Activated naive CD4-positive, alpha-beta T cell treated with anti-CD3 and anti-CD28 coated beads for 36 hours (primary cell): ENCODE measurements at regions of chr1 and their contacts with region 1.

Region 1: DNA sequence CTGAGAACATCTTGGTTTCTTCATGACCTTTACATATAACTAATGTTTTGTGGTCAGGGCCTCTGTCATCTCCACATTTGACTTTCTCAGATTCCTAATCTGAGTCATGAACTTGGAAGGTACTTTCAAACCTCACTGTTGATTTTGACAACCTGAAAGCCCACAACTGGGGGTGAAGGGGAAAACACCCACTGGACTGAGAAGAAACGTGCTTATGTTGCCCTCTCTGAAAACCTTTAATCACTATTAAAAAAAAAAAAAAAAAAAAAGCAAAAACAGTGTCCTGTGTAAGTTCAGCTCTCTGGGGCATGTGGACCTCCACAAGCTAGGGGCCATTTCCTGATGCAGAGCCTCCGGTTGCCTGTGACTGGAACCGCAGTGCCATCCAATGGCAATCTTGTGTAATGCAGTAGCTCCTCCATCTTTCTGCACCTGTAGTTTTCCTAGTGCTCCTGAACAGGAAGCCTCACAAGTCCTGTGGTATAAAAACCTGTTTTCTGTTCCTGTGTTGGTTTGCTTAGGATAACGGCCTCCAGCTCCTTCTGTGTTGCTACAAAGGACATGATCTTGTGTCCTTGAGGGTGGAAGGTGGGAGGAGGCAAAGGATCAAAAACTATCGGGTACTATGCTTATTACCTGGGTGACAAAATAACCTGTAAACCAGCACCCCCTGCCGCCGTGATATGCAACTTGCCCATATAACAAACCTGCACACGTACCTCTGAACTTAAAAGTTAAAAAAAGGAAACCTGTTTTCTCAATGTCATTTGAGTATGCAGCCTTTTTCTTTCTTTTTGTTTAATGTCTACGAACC is 124.5 kb downstream of the ZNF648 start:
- DNase-seq: peak; percentile 77
- H3K4me3 Mint-ChIP-seq: no peak overlapping the region
- H3K27ac Mint-ChIP-seq: no peak overlapping the region
- H3K4me1 Mint-ChIP-seq: peaks cover 4% of the 10 kb centered on the region
- H3K27me3 Mint-ChIP-seq: no peaks in the 10 kb centered on the region

Region 2: DNA sequence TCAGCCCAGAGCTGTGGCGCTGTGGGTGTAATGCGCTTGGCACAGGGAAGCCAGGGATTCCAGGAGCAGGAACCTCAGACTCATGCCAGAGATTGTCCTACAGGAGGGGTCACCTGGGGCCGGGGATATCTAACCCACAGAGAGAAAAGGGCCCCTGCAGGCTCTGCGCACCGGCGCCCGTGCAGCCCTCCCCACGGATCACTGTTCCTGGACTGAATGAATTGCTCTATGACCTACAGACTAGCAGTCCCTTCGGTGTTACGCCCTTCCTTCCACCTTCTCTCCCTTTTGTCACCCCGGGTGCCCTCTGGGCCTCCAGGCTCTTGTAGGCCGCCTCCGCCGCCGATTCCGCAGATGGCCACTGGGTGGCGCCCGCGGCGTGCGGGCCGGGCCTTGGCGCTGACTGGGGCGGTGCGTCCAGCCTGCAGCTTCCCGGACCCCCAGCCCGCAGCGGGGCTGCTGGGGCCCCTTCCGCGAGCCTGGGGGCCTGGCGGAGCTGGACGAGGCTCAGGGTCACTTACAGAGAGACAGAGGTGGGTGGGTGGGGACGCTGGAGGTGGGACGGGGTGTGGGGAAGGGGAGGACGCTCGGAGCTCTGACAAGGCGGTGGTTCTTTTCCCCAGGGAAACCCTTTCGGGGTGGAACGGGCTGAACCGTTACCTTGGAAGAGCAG is 747.1 kb before region 1 on chr1:
- CTCF ChIA-PET with region 1: no interaction called
- intact Hi-C with region 1: loop called (anchors 5 kb)
- DNase-seq: peak; percentile 78
- H3K4me3 Mint-ChIP-seq: no peak overlapping the region
- H3K27ac Mint-ChIP-seq: no peak overlapping the region
- H3K4me1 Mint-ChIP-seq: peaks cover 2% of the 10 kb centered on the region
- H3K27me3 Mint-ChIP-seq: peaks cover 3% of the 10 kb centered on the region

Region 3: GRCh38 chr1:181479137-181479745 is 457.7 kb before region 1 on chr1:
- CTCF ChIA-PET with region 1: interaction called, 16 read pairs
- intact Hi-C with region 1: loop called (anchors 1 kb)
- DNase-seq: peak; percentile 34
- H3K4me3 Mint-ChIP-seq: no peak overlapping the region
- H3K27ac Mint-ChIP-seq: no peak overlapping the region
- H3K4me1 Mint-ChIP-seq: peaks cover 10% of the 10 kb centered on the region
- H3K27me3 Mint-ChIP-seq: peaks cover 25% of the 10 kb centered on the region

Region 4: GRCh38 chr1:181676269-181676668 is 260.7 kb before region 1 on chr1:
- CTCF ChIA-PET with region 1: interaction called, 4 read pairs
- intact Hi-C with region 1: loop called (anchors 5 kb)
- DNase-seq: peak; percentile 28
- H3K4me3 Mint-ChIP-seq: no peak overlapping the region
- H3K27ac Mint-ChIP-seq: no peak overlapping the region
- H3K4me1 Mint-ChIP-seq: no peaks in the 10 kb centered on the region
- H3K27me3 Mint-ChIP-seq: peaks cover 9% of the 10 kb centered on the region

Region 5: GRCh38 chr1:182029379-182030331 is 92.7 kb after region 1 on chr1:
- CTCF ChIA-PET with region 1: no interaction called
- intact Hi-C with region 1: loop called (anchors 5 kb)
- DNase-seq: peak; percentile 99
- H3K4me3 Mint-ChIP-seq: peak overlapping the region; percentile 95
- H3K27ac Mint-ChIP-seq: peak overlapping the region; percentile 95
- H3K4me1 Mint-ChIP-seq: peaks cover 9% of the 10 kb centered on the region
- H3K27me3 Mint-ChIP-seq: no peaks in the 10 kb centered on the region

Region 6: DNA sequence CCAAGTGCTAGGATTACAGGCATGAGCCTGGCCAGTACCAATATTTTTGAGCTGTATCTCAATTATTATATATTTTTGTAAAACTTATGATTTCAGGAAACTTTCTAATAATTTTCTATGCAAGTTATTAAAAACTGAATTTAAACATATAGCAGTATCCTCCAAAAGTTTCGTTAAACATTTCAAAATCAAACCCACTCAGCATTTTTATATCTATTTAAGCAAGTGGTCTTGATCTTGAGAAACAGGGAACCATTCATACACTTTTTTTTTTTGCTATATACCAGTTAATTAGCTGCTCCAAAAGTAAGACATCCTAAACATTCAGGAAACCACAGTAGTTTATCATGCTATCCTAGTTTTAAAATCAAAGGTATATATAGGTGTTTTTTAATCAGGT is 994.0 kb after region 1 on chr1:
- CTCF ChIA-PET with region 1: no interaction called
- intact Hi-C with region 1: no loop called
- DNase-seq: no peak
- H3K4me3 Mint-ChIP-seq: no peak overlapping the region
- H3K27ac Mint-ChIP-seq: no peak overlapping the region
- H3K4me1 Mint-ChIP-seq: no peaks in the 10 kb centered on the region
- H3K27me3 Mint-ChIP-seq: peaks cover 7% of the 10 kb centered on the region